CD4-positive, alpha-beta T cell (primary cell): ENCODE measurements at regions of chr1 and their contacts with region 1.

Region 1: DNA sequence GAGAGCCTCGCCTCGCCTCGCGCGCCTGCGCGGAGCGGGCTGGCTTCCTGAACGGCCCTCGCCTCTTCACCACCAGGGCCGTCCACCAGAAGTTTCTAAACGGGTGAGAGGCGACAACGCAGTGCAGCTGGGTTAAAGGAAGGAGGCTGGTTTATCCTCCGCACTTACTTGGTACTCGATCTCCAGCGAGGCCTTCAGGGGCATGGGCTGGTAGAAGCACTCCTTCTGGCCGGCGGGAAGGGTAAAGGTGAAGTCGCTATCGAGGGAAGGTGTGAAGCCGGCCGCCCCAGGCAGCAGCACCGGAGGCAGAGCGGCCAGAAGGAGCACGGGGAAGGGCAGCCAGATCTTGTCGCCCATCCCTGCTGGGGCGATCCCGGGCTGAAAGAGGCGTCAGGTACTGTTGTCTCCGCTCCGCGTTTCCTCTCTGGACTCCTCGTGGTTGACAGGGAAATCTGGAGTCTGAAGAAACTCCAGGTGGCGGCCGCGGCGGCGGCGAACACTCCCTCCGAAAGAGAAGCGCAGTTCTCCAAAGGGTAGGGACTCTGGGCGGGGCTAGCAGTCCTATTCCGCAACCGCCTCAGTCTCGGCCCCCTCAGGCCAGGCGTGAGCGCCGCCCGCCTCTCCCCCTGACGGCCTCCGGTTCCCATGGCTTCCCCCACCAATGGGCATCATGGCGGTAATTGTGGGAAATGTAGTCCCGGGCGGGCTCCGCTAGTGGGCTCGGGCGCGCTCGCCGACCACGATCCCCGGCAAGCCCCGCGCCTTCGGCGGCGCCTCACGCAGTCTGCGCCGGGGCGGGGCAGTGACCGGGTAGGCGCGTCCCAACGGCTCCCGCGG is at the start of gene TMED5:
- DNase-seq: peak; percentile 88 to 99 (median 94)
- ATAC-seq: peak; percentile 78
- H3K4me3 ChIP-seq: peak within 1 kb of the TSS; percentile 91
- H3K4me3 Mint-ChIP-seq: peak within 1 kb of the TSS; percentile 93
- H3K27ac ChIP-seq: peak within 1 kb of the TSS; percentile 97 to 98
- H3K27ac Mint-ChIP-seq: peak within 1 kb of the TSS; percentile 95
- H3K4me1 ChIP-seq: peaks cover 25% of the 10 kb centered on the region
- H3K4me1 Mint-ChIP-seq: peaks cover 52% of the 10 kb centered on the region
- H3K27me3 ChIP-seq: no peaks in the 10 kb centered on the region
- H3K27me3 Mint-ChIP-seq: no peaks in the 10 kb centered on the region
- CTCF ChIP-seq: peak; percentile 14
- total RNA-seq, gene TMED5: 42.3 to 43.2 TPM

Region 2: DNA sequence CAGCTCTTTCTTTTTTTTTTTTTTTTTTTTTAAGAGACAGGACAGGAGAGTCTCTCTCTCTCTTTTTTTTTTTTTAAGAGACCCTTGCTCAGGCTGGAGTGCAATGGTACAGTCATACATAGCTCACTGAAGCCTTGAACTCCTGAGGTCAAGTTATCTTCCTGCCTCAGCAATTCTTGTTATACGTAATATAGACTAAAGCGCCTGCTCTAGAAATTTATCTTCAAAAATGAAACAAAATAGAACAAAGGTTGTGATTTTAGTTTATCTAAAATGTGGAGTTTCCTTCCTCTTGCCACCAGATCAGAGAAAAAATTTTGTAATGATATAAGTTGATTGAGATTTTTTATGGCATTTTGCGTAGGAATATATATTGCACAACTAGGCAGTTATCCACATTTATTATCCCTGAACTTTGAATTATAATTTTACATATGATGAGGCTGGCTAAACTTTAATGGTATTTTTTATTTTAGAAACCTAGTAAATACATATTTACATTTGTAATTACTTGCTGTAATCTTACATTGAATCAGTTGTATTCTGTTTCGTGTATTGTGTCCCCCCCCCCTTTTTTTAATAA is 56.8 kb before region 1 on chr1:
- CTCF ChIA-PET with region 1: interaction called, 4 read pairs
- POLR2A ChIA-PET with region 1: no interaction called
- intact Hi-C with region 1: loop called in 1 of 2 experiments (anchors 10 kb)
- DNase-seq: no peak
- ATAC-seq: no peak
- H3K4me3 ChIP-seq: no peak overlapping the region
- H3K4me3 Mint-ChIP-seq: no peak overlapping the region
- H3K27ac ChIP-seq: no peak overlapping the region
- H3K27ac Mint-ChIP-seq: no peak overlapping the region
- H3K4me1 ChIP-seq: no peaks in the 10 kb centered on the region
- H3K4me1 Mint-ChIP-seq: peaks cover 21% of the 10 kb centered on the region
- H3K27me3 ChIP-seq: no peaks in the 10 kb centered on the region
- H3K27me3 Mint-ChIP-seq: no peaks in the 10 kb centered on the region
- CTCF ChIP-seq: no peak

Region 3: GRCh38 chr1:93164816-93165215 is 15.3 kb before region 1 on chr1:
- CTCF ChIA-PET with region 1: no interaction called
- POLR2A ChIA-PET with region 1: no interaction called
- intact Hi-C with region 1: no loop called
- DNase-seq: no peak
- ATAC-seq: no peak
- H3K4me3 ChIP-seq: no peak overlapping the region
- H3K4me3 Mint-ChIP-seq: no peak overlapping the region
- H3K27ac ChIP-seq: no peak overlapping the region
- H3K27ac Mint-ChIP-seq: peak overlapping the region; percentile 6
- H3K4me1 ChIP-seq: peaks cover 6% of the 10 kb centered on the region
- H3K4me1 Mint-ChIP-seq: peaks cover 62% of the 10 kb centered on the region
- H3K27me3 ChIP-seq: no peaks in the 10 kb centered on the region
- H3K27me3 Mint-ChIP-seq: no peaks in the 10 kb centered on the region
- CTCF ChIP-seq: no peak